ENCODE measurements at regions of chr6 and their contacts with region 1.

Region 1: GRCh38 chr6:117861545-117861944 is 45.5 kb upstream of the SLC35F1 start:
- DNase-seq: no peak
- H3K27ac ChIP-seq: no peak overlapping the region
- CTCF ChIP-seq: no peak

Region 2: GRCh38 chr6:117880824-117881223 is 19.3 kb after region 1 on chr6:
- CTCF ChIA-PET with region 1: no interaction called
- POLR2A ChIA-PET with region 1: interaction called, 10 read pairs
- DNase-seq: no peak
- H3K27ac ChIP-seq: no peak overlapping the region
- CTCF ChIP-seq: no peak